ENCODE measurements at regions of chr1 and their contacts with region 1.

Region 1: DNA sequence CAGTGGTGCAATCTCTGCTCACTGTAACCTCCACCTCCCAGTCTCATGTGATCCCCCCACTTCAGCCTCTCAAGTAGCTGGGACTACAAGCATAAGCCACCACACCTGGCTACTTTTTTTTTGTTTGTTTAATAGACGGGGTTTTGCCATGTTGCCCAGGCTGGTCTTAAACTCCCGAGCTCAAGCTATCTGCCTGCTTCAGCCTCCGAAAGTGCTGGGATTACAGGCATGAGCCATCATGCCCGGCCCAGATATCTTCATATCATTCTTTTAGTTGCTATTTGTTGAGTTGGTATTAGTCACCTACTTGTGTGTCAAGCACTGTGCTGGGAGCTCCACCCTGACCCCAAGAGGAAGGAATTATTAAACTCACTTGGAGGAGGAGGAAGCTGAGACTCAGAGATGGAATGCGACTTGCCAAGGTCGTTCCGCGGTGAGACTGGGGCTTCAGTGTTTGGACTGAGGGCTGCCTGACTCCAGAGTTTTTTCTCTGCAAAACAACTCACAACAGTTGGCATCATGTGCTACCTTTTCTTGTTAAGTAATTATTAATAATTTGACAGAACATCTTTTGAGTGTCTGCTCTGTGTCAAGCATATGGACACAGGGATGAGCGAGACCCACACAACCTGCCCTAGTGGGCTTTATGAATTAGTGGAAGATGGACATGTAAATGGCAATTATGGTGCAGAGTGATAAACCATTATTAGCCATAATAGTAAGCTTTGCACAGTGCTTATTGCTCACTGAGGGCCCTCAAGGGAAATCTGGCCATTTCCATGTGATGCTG is 132.0 kb downstream of the FOXD2 start:
- DNase-seq: peak; percentile 77
- ATAC-seq: peak; percentile 91
- H3K4me3 ChIP-seq: no peak overlapping the region
- H3K27ac ChIP-seq: peak overlapping the region; percentile 60
- H3K4me1 ChIP-seq: peaks cover 18% of the 10 kb centered on the region
- H3K27me3 ChIP-seq: no peaks in the 10 kb centered on the region
- CTCF ChIP-seq: peak; percentile 57

Region 2: DNA sequence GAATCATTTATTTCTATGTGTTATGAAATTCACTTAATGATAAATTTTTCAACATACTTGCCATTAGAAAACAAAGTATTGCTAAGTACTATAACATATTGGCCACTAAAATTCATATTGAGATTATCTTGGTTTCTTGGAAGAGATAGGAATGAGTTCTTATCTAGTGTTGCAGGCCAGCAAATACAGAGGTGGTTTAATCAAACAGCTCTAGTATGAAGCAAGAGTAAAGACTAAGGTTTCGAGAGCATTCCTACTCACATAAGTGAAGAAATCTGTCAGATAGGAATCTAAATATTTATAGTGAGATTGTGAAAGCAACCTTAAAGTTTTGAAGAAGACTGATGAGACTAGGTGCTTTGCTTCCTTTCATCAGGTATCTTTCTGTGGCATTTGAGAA is 191.7 kb before region 1 on chr1:
- intact Hi-C with region 1: no loop called
- DNase-seq: no peak
- ATAC-seq: peak; percentile 34
- H3K4me3 ChIP-seq: no peak overlapping the region
- H3K27ac ChIP-seq: no peak overlapping the region
- H3K4me1 ChIP-seq: peaks cover 6% of the 10 kb centered on the region
- H3K27me3 ChIP-seq: no peaks in the 10 kb centered on the region
- CTCF ChIP-seq: no peak

Region 3: GRCh38 chr1:47650197-47650596 is 80.3 kb after region 1 on chr1:
- intact Hi-C with region 1: loop called (anchors 10 kb)
- DNase-seq: peak; percentile 85
- ATAC-seq: peak; percentile 81
- H3K4me3 ChIP-seq: no peak overlapping the region
- H3K27ac ChIP-seq: no peak overlapping the region
- H3K4me1 ChIP-seq: no peaks in the 10 kb centered on the region
- H3K27me3 ChIP-seq: no peaks in the 10 kb centered on the region
- CTCF ChIP-seq: no peak